ENCODE measurements at regions of chr10 and their contacts with region 1.

Region 1: GRCh38 chr10:100878291-100878910 is 34.4 kb upstream of the SLF2 start:
- DNase-seq: peak in 1 of 4 donors; percentile 83
- ATAC-seq: peak; percentile 82
- H3K4me3 ChIP-seq: no peak overlapping the region
- H3K27ac ChIP-seq: no peak overlapping the region
- H3K4me1 ChIP-seq: peaks cover 3 to 6% of the 10 kb centered on the region in 2 donors
- H3K27me3 ChIP-seq: peaks cover 0 to 28% of the 10 kb centered on the region in 2 donors
- CTCF ChIP-seq: peak; percentile 33 to 39

Region 2: DNA sequence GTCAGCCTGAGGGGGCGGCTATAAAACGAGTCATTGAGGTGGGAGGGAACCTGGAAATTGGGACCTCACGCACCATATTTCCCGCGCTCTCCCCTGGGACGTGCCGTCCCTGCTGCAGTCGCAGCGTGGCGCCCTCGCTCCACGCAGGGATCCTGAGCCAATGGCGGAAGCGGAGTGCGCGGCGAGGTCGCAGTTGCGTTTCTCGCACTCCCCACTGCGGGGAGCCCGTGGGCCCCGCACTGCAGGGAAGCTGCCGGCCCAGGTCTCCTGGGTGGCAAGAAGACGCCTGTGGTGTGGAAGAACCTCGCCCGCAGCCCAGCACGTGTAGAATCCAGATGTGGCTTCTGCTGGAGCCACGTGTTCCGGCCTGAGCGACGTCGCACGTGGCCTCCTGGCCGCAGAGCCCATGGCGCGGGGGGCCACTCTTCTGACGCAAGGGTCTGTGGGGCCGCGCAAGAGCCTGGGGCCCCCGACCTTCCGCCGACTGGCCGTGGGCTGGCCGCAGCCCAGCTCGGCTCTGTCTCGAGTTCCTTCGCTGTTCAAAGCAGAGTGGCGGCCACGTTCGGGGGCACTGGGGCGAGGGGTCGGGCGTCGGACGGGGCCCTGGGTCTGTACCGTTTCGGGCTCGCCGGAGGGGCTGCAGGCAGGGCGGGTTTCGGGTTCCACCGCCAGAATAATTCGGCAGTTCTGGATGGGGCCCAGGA is 316.2 kb before region 1 on chr10:
- intact Hi-C with region 1: loop called in 1 of 2 experiments (anchors 10 kb)
- DNase-seq: peak; percentile 59 to 90 (median 72)
- ATAC-seq: peak; percentile 96
- H3K4me3 ChIP-seq: no peak overlapping the region
- H3K27ac ChIP-seq: no peak overlapping the region
- H3K4me1 ChIP-seq: peaks cover 5 to 12% of the 10 kb centered on the region in 2 donors
- H3K27me3 ChIP-seq: peaks cover 18 to 57% of the 10 kb centered on the region in 2 donors
- CTCF ChIP-seq: peak; percentile 67 to 72

Region 3: GRCh38 chr10:100659361-100660098 is 218.9 kb before region 1 on chr10:
- intact Hi-C with region 1: loop called in 1 of 2 experiments (anchors 10 kb)
- DNase-seq: peak in 1 of 4 donors; percentile 69
- ATAC-seq: no peak
- H3K4me3 ChIP-seq: no peak overlapping the region
- H3K27ac ChIP-seq: no peak overlapping the region
- H3K4me1 ChIP-seq: peaks cover 0 to 17% of the 10 kb centered on the region in 2 donors
- H3K27me3 ChIP-seq: peaks cover 67 to 100% of the 10 kb centered on the region in 2 donors
- CTCF ChIP-seq: no peak

Region 4: DNA sequence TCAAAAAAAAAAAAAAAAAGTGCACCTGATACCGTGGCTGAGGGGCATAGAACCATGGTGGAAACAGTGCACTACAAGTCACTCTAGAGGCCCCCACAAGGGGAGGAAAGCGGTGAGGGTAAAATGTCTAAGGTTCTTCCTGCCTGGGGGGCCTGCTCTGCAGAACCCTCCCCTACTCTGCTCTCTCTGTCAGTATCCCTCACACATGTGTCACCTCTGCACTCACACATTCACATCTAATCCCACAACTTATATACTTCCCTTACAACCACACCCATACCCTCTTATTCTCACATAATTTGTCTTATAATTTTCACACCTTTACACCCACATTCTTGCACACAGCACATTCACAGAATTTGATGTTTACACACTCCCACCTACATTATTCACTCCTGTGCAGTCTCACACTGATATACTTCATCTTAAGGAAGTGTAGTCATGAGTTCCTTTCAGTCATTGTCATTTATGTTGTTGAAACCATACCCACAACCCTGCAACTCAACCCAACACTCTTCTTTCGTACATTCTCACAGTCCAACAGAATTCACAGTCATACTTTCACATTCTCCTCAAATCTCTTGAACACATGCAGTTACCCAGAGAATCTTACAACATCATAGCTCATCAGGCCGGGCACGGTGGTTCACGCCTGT is 201.0 kb before region 1 on chr10:
- intact Hi-C with region 1: no loop called
- DNase-seq: no peak
- ATAC-seq: no peak
- H3K4me3 ChIP-seq: no peak overlapping the region
- H3K27ac ChIP-seq: no peak overlapping the region
- H3K4me1 ChIP-seq: no peaks in the 10 kb centered on the region
- H3K27me3 ChIP-seq: peaks cover 42 to 98% of the 10 kb centered on the region in 2 donors
- CTCF ChIP-seq: no peak

Region 5: DNA sequence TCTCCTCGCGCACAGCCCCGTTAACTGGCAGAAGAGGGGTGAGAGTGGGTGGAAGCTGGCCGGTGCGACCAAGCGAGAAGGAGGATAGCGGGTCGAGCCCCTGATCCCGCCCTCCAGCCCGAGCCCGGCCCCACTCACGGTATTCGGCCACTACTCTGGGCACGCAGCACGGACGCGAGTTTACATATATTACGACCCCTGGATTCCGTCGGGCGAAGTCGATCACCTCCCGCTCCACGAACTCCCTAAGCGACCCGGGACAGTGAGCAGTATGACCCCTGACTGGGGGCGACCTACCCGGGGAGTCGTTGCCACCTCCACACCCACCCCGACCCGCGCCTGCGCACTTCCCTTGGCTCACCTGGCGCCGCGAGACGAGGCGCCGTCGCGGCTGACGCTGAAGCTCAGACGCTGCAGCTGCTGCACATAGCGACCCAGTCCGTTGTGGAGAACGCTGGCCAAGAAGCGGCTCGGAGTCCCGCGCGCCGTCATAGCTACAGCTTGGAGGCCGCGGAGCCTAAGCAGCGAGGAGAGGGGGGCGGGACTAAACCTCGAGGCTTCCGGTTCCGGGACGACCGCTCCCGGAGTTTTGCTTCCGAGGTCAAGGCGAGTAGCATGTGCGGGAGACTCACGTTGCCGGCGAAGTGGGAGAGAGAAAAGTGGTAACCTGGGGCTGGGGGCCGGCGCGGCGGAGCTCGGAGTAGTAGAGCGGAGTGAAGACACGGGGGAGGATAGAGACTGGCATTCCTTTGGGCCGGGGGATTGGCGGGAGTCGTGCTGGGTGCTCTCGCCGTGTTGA is 108.8 kb after region 1 on chr10 and contains the starts of genes MRPL43 and TWNK:
- intact Hi-C with region 1: no loop called
- DNase-seq: peak; percentile 81 to 94 (median 84)
- ATAC-seq: peak; percentile 96
- H3K4me3 ChIP-seq: peak within 1 kb of the TSS; percentile 73 to 92
- H3K27ac ChIP-seq: peak within 1 kb of the TSS; percentile 34 to 79
- H3K4me1 ChIP-seq: peaks cover 14 to 33% of the 10 kb centered on the region in 2 donors
- H3K27me3 ChIP-seq: no peaks in the 10 kb centered on the region
- CTCF ChIP-seq: no peak
- polyA plus RNA-seq, gene MRPL43: 75.7 to 103 (median 86.4) TPM
- polyA plus RNA-seq, gene TWNK: 9.2 to 12.5 (median 10.6) TPM